ENCODE measurements at regions of chr17 and their contacts with region 1.

Region 1: GRCh38 chr17:82126556-82127314 is 28.7 kb upstream of the FASN start:
- DNase-seq: peak; percentile 51 to 99 (median 98)
- ATAC-seq: peak; percentile 92
- H3K4me3 ChIP-seq: peak overlapping the region; percentile 36
- H3K4me3 Mint-ChIP-seq: peak overlapping the region; percentile 71 to 87 (median 84)
- H3K27ac ChIP-seq: peak overlapping the region; percentile 97
- H3K27ac Mint-ChIP-seq: peak overlapping the region; percentile 93 to 100 (median 98)
- H3K4me1 ChIP-seq: peaks cover 36 to 78% of the 10 kb centered on the region in 2 donors
- H3K4me1 Mint-ChIP-seq: peaks cover 33 to 83% (median 65%) of the 10 kb centered on the region in 7 donors
- H3K27me3 ChIP-seq: no peaks in the 10 kb centered on the region
- H3K27me3 Mint-ChIP-seq: no peaks in the 10 kb centered on the region

Region 2: GRCh38 chr17:81860756-81861518 is 265.8 kb before region 1 on chr17:
- CTCF ChIA-PET with region 1: no interaction called
- POLR2A ChIA-PET with region 1: no interaction called
- intact Hi-C with region 1: no loop called
- DNase-seq: peak; percentile 98 to 100 (median 100)
- ATAC-seq: peak; percentile 91
- H3K4me3 ChIP-seq: peak overlapping the region; percentile 83
- H3K4me3 Mint-ChIP-seq: peak overlapping the region; percentile 81 to 99 (median 90)
- H3K27ac ChIP-seq: peak overlapping the region; percentile 95
- H3K27ac Mint-ChIP-seq: peak overlapping the region; percentile 89 to 100 (median 98)
- H3K4me1 ChIP-seq: peaks cover 20 to 27% of the 10 kb centered on the region in 2 donors
- H3K4me1 Mint-ChIP-seq: peaks cover 19 to 53% (median 43%) of the 10 kb centered on the region in 7 donors
- H3K27me3 ChIP-seq: no peaks in the 10 kb centered on the region
- H3K27me3 Mint-ChIP-seq: peaks cover 0 to 5% (median 0%) of the 10 kb centered on the region in 5 donors

Region 3: DNA sequence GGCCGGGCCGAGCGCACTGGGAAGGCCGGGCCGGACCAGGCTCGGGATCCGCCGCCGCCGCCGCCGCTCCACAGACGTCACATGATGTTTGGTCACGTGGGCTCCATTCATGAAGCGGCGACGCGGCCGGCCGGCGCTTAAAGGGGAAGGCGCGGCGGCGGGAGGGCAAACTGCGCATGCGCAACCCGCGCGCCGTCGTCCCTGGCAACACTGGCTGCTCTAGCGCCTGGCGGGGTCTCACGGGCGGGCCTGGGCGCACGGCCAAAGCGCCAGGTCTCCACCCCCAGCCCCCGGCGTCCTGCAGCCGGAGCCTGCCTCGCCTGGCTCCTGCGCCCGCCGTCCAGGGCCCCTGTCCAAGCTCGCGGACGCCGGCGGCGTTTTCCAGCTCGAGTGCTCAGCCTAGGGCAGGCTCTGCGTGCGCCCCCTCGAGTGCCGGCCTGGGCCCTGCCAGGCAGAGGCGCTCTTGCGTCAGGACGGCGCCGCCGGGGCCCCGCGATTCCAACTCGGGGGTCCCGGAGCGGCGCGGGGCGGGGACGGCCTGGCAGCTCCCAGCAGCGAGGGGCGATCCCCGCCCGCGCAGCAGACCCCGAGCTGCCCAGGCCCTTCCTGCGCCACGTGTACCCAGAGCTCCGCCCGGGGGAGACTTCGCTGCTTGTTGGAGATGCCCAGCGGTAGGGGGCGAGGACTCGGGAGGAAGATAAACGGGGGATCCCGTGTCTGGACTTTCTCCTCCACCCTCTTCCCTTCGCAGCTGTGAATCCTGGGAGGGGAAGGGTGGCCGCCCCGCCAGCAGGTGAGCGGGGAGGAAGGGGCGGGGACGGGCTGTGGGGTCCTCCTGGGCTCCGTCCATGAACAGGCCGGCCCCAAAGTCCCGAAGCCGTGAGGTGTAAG is 198.8 kb before region 1 on chr17 and contains the start of gene MAFG:
- CTCF ChIA-PET with region 1: no interaction called
- POLR2A ChIA-PET with region 1: no interaction called
- intact Hi-C with region 1: no loop called
- DNase-seq: peak; percentile 81 to 93 (median 88)
- ATAC-seq: peak; percentile 72
- H3K4me3 ChIP-seq: peak within 1 kb of the TSS; percentile 58
- H3K4me3 Mint-ChIP-seq: peak within 1 kb of the TSS; percentile 77 to 91 (median 84)
- H3K27ac ChIP-seq: peak within 1 kb of the TSS; percentile 71
- H3K27ac Mint-ChIP-seq: peak within 1 kb of the TSS; percentile 69 to 95 (median 88)
- H3K4me1 ChIP-seq: peaks cover 10 to 31% of the 10 kb centered on the region in 2 donors
- H3K4me1 Mint-ChIP-seq: peaks cover 9 to 29% (median 20%) of the 10 kb centered on the region in 7 donors
- H3K27me3 ChIP-seq: peaks cover 0 to 13% of the 10 kb centered on the region in 2 donors
- H3K27me3 Mint-ChIP-seq: peaks cover 0 to 18% (median 0%) of the 10 kb centered on the region in 5 donors
- total RNA-seq, gene MAFG: 12.9 to 28.1 (median 18.1) TPM

Region 4: GRCh38 chr17:82065638-82066303 is 61.0 kb before region 1 on chr17 and contains the start of gene DUS1L:
- CTCF ChIA-PET with region 1: no interaction called
- POLR2A ChIA-PET with region 1: interaction called, 6 read pairs
- intact Hi-C with region 1: loop called in 1 of 2 experiments (anchors 1 kb)
- DNase-seq: peak; percentile 55 to 87 (median 71)
- ATAC-seq: peak; percentile 95
- H3K4me3 ChIP-seq: peak within 1 kb of the TSS; percentile 66
- H3K4me3 Mint-ChIP-seq: peak within 1 kb of the TSS; percentile 73 to 91 (median 82)
- H3K27ac ChIP-seq: peak within 1 kb of the TSS; percentile 86
- H3K27ac Mint-ChIP-seq: peak within 1 kb of the TSS; percentile 86 to 95 (median 93)
- H3K4me1 ChIP-seq: peaks cover 8 to 27% of the 10 kb centered on the region in 2 donors
- H3K4me1 Mint-ChIP-seq: peaks cover 0 to 18% (median 10%) of the 10 kb centered on the region in 7 donors
- H3K27me3 ChIP-seq: no peaks in the 10 kb centered on the region
- H3K27me3 Mint-ChIP-seq: no peaks in the 10 kb centered on the region
- total RNA-seq, gene DUS1L: 127 to 157 (median 147) TPM

Region 5: DNA sequence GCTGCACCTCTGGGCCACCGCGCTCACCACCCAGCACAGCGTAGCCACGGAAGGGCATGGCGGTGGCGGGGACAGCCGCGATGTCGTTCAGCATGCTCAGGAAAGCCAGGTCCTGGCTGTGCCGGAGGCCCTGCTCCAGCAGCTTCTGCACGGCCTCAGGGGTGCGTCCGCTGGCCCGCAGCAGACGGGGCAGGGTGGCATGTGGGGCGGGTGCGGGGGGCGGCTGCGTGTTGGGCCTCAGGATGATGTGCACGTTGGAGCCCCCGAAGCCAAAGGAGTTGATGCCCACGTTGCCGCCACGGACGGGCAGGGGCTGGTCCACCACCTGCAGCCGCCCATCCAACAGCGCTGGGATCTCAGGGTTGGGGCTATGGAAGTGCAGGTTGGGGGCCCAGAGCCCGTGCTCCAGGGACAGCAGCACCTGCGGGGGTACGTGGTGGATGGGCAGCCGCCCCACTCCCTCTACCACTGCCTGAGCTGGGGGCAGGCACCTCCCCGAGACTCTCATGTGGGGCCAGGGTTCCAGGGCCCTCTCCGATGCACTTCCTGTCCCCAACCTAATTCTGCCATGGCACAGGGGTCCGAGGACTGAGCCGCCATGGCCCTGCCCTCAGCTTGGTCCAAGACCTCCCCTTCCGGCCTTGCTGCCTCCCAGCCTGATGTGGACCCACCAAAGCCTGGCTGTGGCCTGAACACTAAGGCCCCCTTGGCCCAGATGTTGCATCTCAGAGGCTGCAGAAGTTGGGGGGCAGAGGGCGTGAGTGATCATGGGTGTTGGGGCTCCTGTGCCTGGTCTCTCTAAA is 35.3 kb before region 1 on chr17:
- CTCF ChIA-PET with region 1: no interaction called
- POLR2A ChIA-PET with region 1: no interaction called
- intact Hi-C with region 1: no loop called
- DNase-seq: peak in 1 of 9 donors; percentile 8
- ATAC-seq: no peak
- H3K4me3 ChIP-seq: no peak overlapping the region
- H3K4me3 Mint-ChIP-seq: no peak overlapping the region
- H3K27ac ChIP-seq: no peak overlapping the region
- H3K27ac Mint-ChIP-seq: no peak overlapping the region
- H3K4me1 ChIP-seq: peaks cover 0 to 5% of the 10 kb centered on the region in 2 donors
- H3K4me1 Mint-ChIP-seq: peaks cover 0 to 4% (median 0%) of the 10 kb centered on the region in 7 donors
- H3K27me3 ChIP-seq: no peaks in the 10 kb centered on the region
- H3K27me3 Mint-ChIP-seq: no peaks in the 10 kb centered on the region

Region 6: GRCh38 chr17:82153745-82154375 is 27.1 kb after region 1 on chr17:
- CTCF ChIA-PET with region 1: interaction called, 8 read pairs
- POLR2A ChIA-PET with region 1: interaction called, 8 read pairs
- intact Hi-C with region 1: loop called (anchors 1 to 2 kb)
- DNase-seq: peak; percentile 76 to 91 (median 82)
- ATAC-seq: peak; percentile 99
- H3K4me3 ChIP-seq: no peak overlapping the region
- H3K4me3 Mint-ChIP-seq: no peak overlapping the region
- H3K27ac ChIP-seq: no peak overlapping the region
- H3K27ac Mint-ChIP-seq: peak overlapping the region in 7 of 9 donors; percentile 23 to 97 (median 87)
- H3K4me1 ChIP-seq: peaks cover 0 to 10% of the 10 kb centered on the region in 2 donors
- H3K4me1 Mint-ChIP-seq: peaks cover 5 to 20% (median 10%) of the 10 kb centered on the region in 7 donors
- H3K27me3 ChIP-seq: no peaks in the 10 kb centered on the region
- H3K27me3 Mint-ChIP-seq: no peaks in the 10 kb centered on the region

Region 7: GRCh38 chr17:82238472-82239201 is 111.9 kb after region 1 on chr17:
- CTCF ChIA-PET with region 1: no interaction called
- POLR2A ChIA-PET with region 1: no interaction called
- intact Hi-C with region 1: no loop called
- DNase-seq: peak in 8 of 9 donors; percentile 55 to 75 (median 59)
- ATAC-seq: peak; percentile 54
- H3K4me3 ChIP-seq: peak overlapping the region; percentile 41
- H3K4me3 Mint-ChIP-seq: peak overlapping the region; percentile 75 to 89 (median 82)
- H3K27ac ChIP-seq: peak overlapping the region; percentile 52
- H3K27ac Mint-ChIP-seq: peak overlapping the region; percentile 79 to 95 (median 89)
- H3K4me1 ChIP-seq: peaks cover 7 to 43% of the 10 kb centered on the region in 2 donors
- H3K4me1 Mint-ChIP-seq: peaks cover 5 to 48% (median 43%) of the 10 kb centered on the region in 7 donors
- H3K27me3 ChIP-seq: no peaks in the 10 kb centered on the region
- H3K27me3 Mint-ChIP-seq: no peaks in the 10 kb centered on the region

Region 8: GRCh38 chr17:82292251-82293154 is 165.8 kb after region 1 on chr17:
- CTCF ChIA-PET with region 1: interaction called, 3 read pairs
- POLR2A ChIA-PET with region 1: interaction called, 9 read pairs
- intact Hi-C with region 1: loop called in 1 of 2 experiments (anchors 1 kb)
- DNase-seq: peak; percentile 76 to 94 (median 91)
- ATAC-seq: peak; percentile 95
- H3K4me3 ChIP-seq: peak overlapping the region; percentile 72
- H3K4me3 Mint-ChIP-seq: peak overlapping the region; percentile 83 to 94 (median 91)
- H3K27ac ChIP-seq: peak overlapping the region; percentile 99
- H3K27ac Mint-ChIP-seq: peak overlapping the region; percentile 86 to 96 (median 92)
- H3K4me1 ChIP-seq: peaks cover 18 to 21% of the 10 kb centered on the region in 2 donors
- H3K4me1 Mint-ChIP-seq: peaks cover 14 to 54% (median 43%) of the 10 kb centered on the region in 7 donors
- H3K27me3 ChIP-seq: no peaks in the 10 kb centered on the region
- H3K27me3 Mint-ChIP-seq: no peaks in the 10 kb centered on the region